ENCODE measurements at regions of chr6 and their contacts with region 1.

Region 1: GRCh38 chr6:130872250-130873095 is 45.3 kb downstream of the SMLR1 start:
- DNase-seq: peak; percentile 79
- ATAC-seq: peak; percentile 49
- H3K4me3 Mint-ChIP-seq: no peak overlapping the region
- H3K27ac Mint-ChIP-seq: no peak overlapping the region
- H3K4me1 Mint-ChIP-seq: peaks cover 7% of the 10 kb centered on the region
- H3K27me3 Mint-ChIP-seq: no peaks in the 10 kb centered on the region

Region 2: DNA sequence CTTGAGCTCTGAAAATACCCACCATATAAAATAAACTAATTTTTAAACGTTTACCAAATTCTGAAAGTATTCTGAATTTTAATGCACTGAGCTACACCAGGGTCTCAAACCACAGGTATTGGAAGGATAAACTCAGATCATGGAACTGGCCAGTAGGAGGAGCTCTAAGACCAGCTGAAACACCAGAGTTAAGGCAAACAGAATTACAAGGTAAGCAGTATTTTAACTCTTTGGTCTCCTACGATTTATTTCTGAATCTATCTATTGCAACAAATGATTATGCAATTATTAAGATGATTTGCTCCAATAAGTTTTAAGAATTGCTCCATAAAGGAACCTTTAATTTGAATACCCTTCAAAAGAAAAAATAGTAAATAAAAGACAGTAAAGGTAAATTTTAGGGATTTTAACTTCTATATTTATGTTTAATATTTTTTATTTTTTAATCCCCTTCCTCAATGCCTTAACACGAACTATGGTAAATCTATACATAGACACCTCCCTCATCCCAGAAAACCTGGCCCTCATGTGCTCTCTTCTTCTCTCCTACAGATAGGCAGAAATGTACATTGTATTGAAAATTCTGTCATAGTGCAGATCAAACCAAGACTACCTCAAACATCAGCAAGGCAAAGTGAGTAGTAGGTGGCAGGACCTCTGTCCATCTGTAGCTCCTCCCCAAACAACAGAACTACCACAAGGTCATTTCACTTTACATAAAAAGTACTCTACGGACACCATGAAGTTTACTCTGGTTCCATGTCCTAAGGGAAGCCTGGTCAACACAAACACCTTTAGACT is 13.1 kb after region 1 on chr6:
- CTCF ChIA-PET with region 1: interaction called, 13 read pairs
- DNase-seq: peak; percentile 79
- ATAC-seq: peak; percentile 78
- H3K4me3 Mint-ChIP-seq: no peak overlapping the region
- H3K27ac Mint-ChIP-seq: no peak overlapping the region
- H3K4me1 Mint-ChIP-seq: no peaks in the 10 kb centered on the region
- H3K27me3 Mint-ChIP-seq: no peaks in the 10 kb centered on the region

Region 3: DNA sequence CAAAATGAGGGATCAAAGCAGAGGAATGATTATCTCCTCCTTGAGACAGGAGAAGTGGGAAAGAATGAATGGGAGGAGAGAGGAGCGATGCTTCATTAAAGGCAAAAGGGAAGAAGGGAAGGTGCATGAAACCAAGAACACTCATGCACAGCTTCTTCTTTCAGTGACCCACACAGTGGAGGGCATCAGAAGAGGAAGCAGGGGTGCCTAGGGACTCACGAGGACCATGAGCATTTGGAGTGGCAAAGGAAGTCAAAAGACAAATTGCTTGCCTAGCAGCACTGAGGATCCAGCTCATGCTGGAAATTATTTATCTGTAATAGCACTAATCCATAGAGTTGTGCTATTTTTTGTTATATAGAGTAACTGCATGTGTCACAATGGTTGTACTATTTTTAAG is 20.8 kb after region 1 on chr6:
- CTCF ChIA-PET with region 1: interaction called, 13 read pairs
- DNase-seq: no peak
- ATAC-seq: no peak
- H3K4me3 Mint-ChIP-seq: no peak overlapping the region
- H3K27ac Mint-ChIP-seq: no peak overlapping the region
- H3K4me1 Mint-ChIP-seq: peaks cover 2% of the 10 kb centered on the region
- H3K27me3 Mint-ChIP-seq: no peaks in the 10 kb centered on the region

Region 4: GRCh38 chr6:130913120-130913519 is 40.6 kb after region 1 on chr6:
- CTCF ChIA-PET with region 1: no interaction called
- DNase-seq: peak; percentile 49
- ATAC-seq: peak; percentile 51
- H3K4me3 Mint-ChIP-seq: no peak overlapping the region
- H3K27ac Mint-ChIP-seq: no peak overlapping the region
- H3K4me1 Mint-ChIP-seq: peaks cover 9% of the 10 kb centered on the region
- H3K27me3 Mint-ChIP-seq: peaks cover 3% of the 10 kb centered on the region

Region 5: GRCh38 chr6:131038597-131039344 is 166.3 kb after region 1 on chr6:
- CTCF ChIA-PET with region 1: no interaction called
- DNase-seq: no peak
- ATAC-seq: no peak
- H3K4me3 Mint-ChIP-seq: no peak overlapping the region
- H3K27ac Mint-ChIP-seq: no peak overlapping the region
- H3K4me1 Mint-ChIP-seq: no peaks in the 10 kb centered on the region
- H3K27me3 Mint-ChIP-seq: no peaks in the 10 kb centered on the region

Measured in activated CD8-positive, alpha-beta memory T cell treated with anti-CD3 and anti-CD28 coated beads, Interleukin-2, amount 10 ng/mL, durations not matched to agents 7 days and 5 days (primary cell).